Common myeloid progenitor, CD34-positive (primary cell): ENCODE measurements at regions of chr3 and their contacts with region 1.

Region 1: DNA sequence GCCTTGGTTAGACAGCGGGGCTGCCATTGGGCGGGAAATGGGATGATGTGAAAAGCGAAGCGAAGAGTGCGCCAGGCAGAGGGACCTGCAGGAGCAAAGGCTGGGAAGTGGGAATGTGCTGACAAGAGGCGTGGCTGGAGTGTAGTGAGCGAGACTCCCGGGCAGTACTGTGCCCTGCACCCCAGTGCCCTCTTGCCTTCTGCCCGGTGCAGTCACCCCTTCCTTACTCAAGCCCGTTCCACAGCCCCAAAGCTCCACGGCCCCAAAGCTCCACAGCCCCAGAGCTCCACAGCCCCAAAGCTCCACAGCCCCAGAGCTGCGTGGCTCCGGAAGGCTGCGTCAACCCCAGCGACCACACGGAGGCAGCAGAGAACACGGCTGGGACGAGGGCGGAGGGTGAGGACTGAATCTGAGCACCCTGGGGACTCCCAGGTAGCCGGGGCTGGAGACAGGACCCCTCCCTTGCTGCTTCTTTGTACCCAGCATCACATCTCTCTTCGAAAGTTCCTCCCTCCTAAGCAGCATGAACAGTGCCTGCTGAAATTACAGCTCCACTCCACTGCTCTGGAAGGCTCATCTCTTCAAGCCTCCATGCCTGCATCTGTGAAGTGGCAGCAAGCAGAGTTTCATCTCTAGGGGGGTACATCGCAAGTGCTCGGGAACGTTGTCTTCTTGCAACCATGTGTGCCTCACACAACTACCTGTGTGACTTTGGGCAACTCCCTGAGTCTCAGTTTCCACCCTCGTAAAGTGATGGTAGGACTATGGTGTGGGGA is 108.9 kb downstream of the FBLN2 start:
- DNase-seq: peak; percentile 47 to 74 (median 66)
- H3K4me3 ChIP-seq: no peak overlapping the region
- H3K27ac ChIP-seq: no peak overlapping the region
- H3K4me1 ChIP-seq: peaks cover 0 to 13% (median 7%) of the 10 kb centered on the region in 4 experiments
- H3K27me3 ChIP-seq: peaks cover 2 to 37% (median 18%) of the 10 kb centered on the region in 5 experiments

Region 2: DNA sequence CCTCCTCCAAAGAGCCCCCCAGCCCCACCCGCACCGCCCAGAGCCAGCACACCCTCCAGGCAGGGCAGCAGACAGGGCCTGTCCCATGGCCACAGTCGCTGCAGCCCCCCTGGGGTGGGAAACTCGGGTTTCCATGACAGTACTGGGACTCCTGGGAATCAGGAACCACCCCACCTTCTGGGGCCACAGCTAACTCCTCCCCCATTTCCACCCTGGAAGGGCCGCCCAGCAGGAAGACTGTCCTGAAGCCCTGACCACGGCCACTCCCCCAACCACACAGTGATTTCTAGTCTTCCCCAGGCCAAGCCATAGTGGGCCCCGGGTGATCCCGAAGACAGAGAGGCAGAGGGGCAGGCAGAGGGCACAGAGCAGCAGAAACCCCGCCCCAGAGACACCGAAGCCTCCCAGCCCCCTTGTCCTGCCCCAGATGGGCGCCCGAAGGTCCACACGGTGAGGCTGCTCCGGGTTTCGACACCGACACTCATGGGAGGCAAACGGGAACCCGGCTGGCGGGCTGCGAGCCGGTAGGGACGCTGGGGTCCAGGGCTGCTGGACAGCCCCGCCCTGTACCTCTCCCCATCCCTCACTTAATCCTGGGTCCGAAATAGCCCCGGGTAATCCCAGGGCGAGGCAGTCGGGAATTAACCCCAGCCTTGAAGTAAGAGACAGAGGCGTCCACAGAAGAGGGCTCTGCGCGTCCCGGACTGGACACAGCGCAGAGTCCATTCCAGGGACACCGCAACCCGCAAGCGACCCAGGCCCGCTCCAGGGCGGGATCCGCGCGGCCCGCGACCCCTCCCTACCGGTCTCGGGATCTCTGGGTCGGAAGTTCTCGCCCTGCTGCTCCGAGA is 376.1 kb before region 1 on chr3:
- CTCF ChIA-PET with region 1: no interaction called
- POLR2A ChIA-PET with region 1: no interaction called
- DNase-seq: peak in 1 of 3 donors; percentile 20
- H3K4me3 ChIP-seq: peak overlapping the region in 5 of 7 experiments; percentile 10 to 66 (median 54)
- H3K27ac ChIP-seq: no peak overlapping the region
- H3K4me1 ChIP-seq: peaks cover 0 to 24% (median 19%) of the 10 kb centered on the region in 4 experiments
- H3K27me3 ChIP-seq: peaks cover 0 to 49% (median 19%) of the 10 kb centered on the region in 5 experiments

Region 3: GRCh38 chr3:13673209-13673608 is 15.4 kb after region 1 on chr3:
- CTCF ChIA-PET with region 1: interaction called, 53 read pairs
- POLR2A ChIA-PET with region 1: no interaction called
- DNase-seq: no peak
- H3K4me3 ChIP-seq: no peak overlapping the region
- H3K27ac ChIP-seq: no peak overlapping the region
- H3K4me1 ChIP-seq: no peaks in the 10 kb centered on the region
- H3K27me3 ChIP-seq: peaks cover 0 to 26% (median 3%) of the 10 kb centered on the region in 5 experiments

Region 4: DNA sequence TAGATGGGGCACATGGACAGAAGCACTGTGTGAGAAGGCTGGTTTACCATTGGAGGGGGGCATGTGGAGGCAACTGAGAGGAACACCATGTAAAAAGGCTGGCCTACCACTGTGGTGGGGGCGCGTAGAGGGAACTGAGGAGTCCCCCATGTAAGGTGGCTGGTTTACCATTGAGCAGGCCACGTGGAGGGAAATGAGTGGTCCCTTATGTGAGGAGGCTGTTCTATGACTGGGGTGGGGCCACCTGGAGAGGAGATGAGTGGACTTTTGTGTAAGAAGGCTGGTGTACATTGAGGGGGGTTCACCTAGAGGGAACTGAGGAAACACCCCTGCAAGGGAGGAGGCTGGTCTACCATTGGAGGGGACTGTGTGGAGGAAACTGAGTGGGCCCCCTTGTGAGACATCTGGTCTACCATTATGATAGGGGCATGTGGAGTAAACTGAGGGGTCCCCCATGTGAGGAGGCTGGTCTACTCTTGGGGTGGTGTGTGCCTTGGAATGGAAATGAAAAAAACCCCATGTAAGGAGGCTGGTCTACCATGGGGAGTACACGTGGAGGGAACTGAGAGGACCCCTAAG is 47.9 kb after region 1 on chr3:
- CTCF ChIA-PET with region 1: no interaction called
- POLR2A ChIA-PET with region 1: no interaction called
- DNase-seq: no peak
- H3K4me3 ChIP-seq: no peak overlapping the region
- H3K27ac ChIP-seq: no peak overlapping the region
- H3K4me1 ChIP-seq: no peaks in the 10 kb centered on the region
- H3K27me3 ChIP-seq: no peaks in the 10 kb centered on the region

Region 5: DNA sequence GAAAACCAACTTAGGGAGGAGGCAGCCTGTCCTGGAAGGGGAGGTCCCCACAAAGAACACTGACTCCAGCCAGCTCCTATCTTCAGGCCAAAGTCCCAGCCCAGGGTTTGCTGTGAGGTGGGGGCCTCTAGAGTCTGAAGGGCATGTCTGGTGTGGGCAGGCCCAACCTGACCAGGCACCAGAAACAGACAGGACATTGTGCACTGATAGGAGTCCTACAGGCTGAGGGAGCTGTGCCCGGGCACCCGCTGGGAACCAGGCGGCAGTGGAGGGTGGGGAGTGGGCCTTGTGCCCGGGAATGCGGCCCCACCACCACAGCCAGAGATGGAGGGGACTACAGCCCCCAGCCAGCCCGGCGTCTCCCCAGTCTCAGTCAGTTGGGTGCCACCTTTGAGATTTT is 60.6 kb after region 1 on chr3:
- CTCF ChIA-PET with region 1: no interaction called
- POLR2A ChIA-PET with region 1: no interaction called
- DNase-seq: no peak
- H3K4me3 ChIP-seq: no peak overlapping the region
- H3K27ac ChIP-seq: no peak overlapping the region
- H3K4me1 ChIP-seq: no peaks in the 10 kb centered on the region
- H3K27me3 ChIP-seq: peaks cover 0 to 3% (median 0%) of the 10 kb centered on the region in 5 experiments